ENCODE measurements at regions of chr16 and their contacts with region 1.

Region 1: GRCh38 chr16:57244767-57245471 is at the start of gene ARL2BP:
- DNase-seq: peak; percentile 92 to 98 (median 97)
- ATAC-seq: peak; percentile 95
- H3K4me3 ChIP-seq: peak within 1 kb of the TSS; percentile 68 to 76
- H3K4me3 Mint-ChIP-seq: peak within 1 kb of the TSS; percentile 92
- H3K27ac ChIP-seq: peak within 1 kb of the TSS; percentile 50 to 87
- H3K27ac Mint-ChIP-seq: peak within 1 kb of the TSS; percentile 96
- H3K4me1 ChIP-seq: peaks cover 9% of the 10 kb centered on the region
- H3K4me1 Mint-ChIP-seq: peaks cover 19% of the 10 kb centered on the region
- H3K27me3 ChIP-seq: no peaks in the 10 kb centered on the region
- H3K27me3 Mint-ChIP-seq: no peaks in the 10 kb centered on the region
- CTCF ChIP-seq: no peak
- total RNA-seq, gene ARL2BP: 32.8 to 35.2 TPM

Region 2: DNA sequence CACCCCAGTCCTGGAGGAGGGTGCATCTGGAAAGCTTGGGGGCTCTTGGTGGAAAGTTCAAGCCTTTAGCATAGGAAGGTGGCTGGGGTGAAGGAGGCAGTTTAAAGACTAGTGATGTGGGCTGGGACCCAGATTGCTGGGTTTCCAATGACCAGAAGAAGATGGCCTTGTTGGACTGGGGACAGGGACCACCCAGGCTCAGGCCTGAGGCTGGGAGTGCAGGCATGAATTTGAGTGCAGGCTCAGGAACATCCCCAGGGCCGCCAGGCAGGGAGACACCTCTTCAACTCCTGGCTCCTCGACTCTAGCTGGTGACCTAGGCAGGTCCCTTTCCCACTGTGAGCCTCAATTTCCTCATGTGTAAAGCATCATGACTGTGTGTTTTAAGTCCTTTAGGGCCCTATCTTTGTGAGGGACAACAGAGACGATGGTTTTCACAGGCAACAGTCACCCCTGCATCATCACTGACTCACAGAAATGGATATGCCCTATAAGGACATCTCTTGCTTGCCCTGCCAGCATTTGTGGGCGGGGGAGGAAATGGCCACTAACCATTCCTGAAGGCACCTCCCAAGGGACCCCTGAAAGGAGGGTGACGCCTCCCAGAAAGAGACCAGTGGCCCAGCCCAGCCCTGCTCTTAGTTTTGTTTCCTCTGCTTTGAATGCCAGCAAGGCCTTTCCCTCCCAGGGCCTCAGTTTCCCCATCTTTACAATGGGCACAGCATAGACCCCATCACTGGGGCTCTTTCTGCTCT is 244.5 kb before region 1 on chr16:
- CTCF ChIA-PET with region 1: no interaction called
- POLR2A ChIA-PET with region 1: no interaction called
- intact Hi-C with region 1: no loop called
- DNase-seq: peak in 4 of 9 experiments; percentile 61 to 69 (median 65)
- ATAC-seq: peak; percentile 65
- H3K4me3 ChIP-seq: peak overlapping the region; percentile 18 to 26
- H3K4me3 Mint-ChIP-seq: peak overlapping the region; percentile 71
- H3K27ac ChIP-seq: peak overlapping the region; percentile 58 to 90
- H3K27ac Mint-ChIP-seq: peak overlapping the region; percentile 96
- H3K4me1 ChIP-seq: peaks cover 90% of the 10 kb centered on the region
- H3K4me1 Mint-ChIP-seq: peaks cover 96% of the 10 kb centered on the region
- H3K27me3 ChIP-seq: no peaks in the 10 kb centered on the region
- H3K27me3 Mint-ChIP-seq: no peaks in the 10 kb centered on the region
- CTCF ChIP-seq: no peak

Region 3: GRCh38 chr16:57091975-57092785 is 152.7 kb before region 1 on chr16 and contains the start of gene CPNE2:
- CTCF ChIA-PET with region 1: no interaction called
- POLR2A ChIA-PET with region 1: no interaction called
- intact Hi-C with region 1: loop called in 1 of 2 experiments (anchors 5 kb)
- DNase-seq: peak in 2 of 9 experiments; percentile 20 to 50
- ATAC-seq: peak; percentile 57
- H3K4me3 ChIP-seq: peak within 1 kb of the TSS; percentile 31 to 49
- H3K4me3 Mint-ChIP-seq: peak within 1 kb of the TSS; percentile 79
- H3K27ac ChIP-seq: no peak within 1 kb of the TSS
- H3K27ac Mint-ChIP-seq: peak within 1 kb of the TSS; percentile 13
- H3K4me1 ChIP-seq: peaks cover 14% of the 10 kb centered on the region
- H3K4me1 Mint-ChIP-seq: peaks cover 14% of the 10 kb centered on the region
- H3K27me3 ChIP-seq: peaks cover 0 to 5% of the 10 kb centered on the region in 2 experiments
- H3K27me3 Mint-ChIP-seq: no peaks in the 10 kb centered on the region
- CTCF ChIP-seq: no peak
- total RNA-seq, gene CPNE2: 5.7 to 6.8 TPM

Region 4: DNA sequence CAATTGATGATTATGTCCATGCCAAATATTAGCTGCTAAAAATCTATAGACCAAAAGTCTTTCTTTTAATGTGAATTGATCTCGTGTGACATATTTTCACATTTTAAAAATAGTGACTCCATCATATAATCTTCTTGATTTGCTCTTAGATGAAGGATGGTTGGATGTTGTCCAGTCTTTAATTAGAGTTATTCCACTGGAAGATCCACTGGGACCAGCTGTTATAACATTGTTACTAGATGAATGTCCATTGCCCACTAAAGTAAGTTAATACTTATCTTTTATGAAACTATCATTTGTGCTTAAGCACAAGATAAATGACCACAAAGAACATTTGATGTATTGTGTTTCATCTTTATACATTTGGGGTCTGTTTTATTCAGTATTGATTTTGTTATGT is 36.0 kb before region 1 on chr16:
- CTCF ChIA-PET with region 1: no interaction called
- POLR2A ChIA-PET with region 1: no interaction called
- intact Hi-C with region 1: no loop called
- DNase-seq: no peak
- ATAC-seq: no peak
- H3K4me3 ChIP-seq: no peak overlapping the region
- H3K4me3 Mint-ChIP-seq: no peak overlapping the region
- H3K27ac ChIP-seq: no peak overlapping the region
- H3K27ac Mint-ChIP-seq: no peak overlapping the region
- H3K4me1 ChIP-seq: no peaks in the 10 kb centered on the region
- H3K4me1 Mint-ChIP-seq: peaks cover 2% of the 10 kb centered on the region
- H3K27me3 ChIP-seq: no peaks in the 10 kb centered on the region
- H3K27me3 Mint-ChIP-seq: no peaks in the 10 kb centered on the region
- CTCF ChIP-seq: no peak

Region 5: GRCh38 chr16:57284208-57284951 is 39.5 kb after region 1 on chr16 and contains the start of gene PLLP:
- CTCF ChIA-PET with region 1: no interaction called
- POLR2A ChIA-PET with region 1: no interaction called
- intact Hi-C with region 1: loop called (anchors 2 to 5 kb)
- DNase-seq: peak in 6 of 9 experiments; percentile 27 to 68 (median 49)
- ATAC-seq: peak; percentile 70
- H3K4me3 ChIP-seq: peak within 1 kb of the TSS; percentile 49 to 50
- H3K4me3 Mint-ChIP-seq: peak within 1 kb of the TSS; percentile 77
- H3K27ac ChIP-seq: no peak within 1 kb of the TSS
- H3K27ac Mint-ChIP-seq: no peak within 1 kb of the TSS
- H3K4me1 ChIP-seq: peaks cover 16% of the 10 kb centered on the region
- H3K4me1 Mint-ChIP-seq: peaks cover 25% of the 10 kb centered on the region
- H3K27me3 ChIP-seq: peaks cover 0 to 13% of the 10 kb centered on the region in 2 experiments
- H3K27me3 Mint-ChIP-seq: peaks cover 3% of the 10 kb centered on the region
- CTCF ChIP-seq: no peak
- total RNA-seq, gene PLLP: 0.47 to 1.1 TPM

Region 6: GRCh38 chr16:57422026-57422944 is 177.4 kb after region 1 on chr16:
- CTCF ChIA-PET with region 1: interaction called, 13 read pairs
- POLR2A ChIA-PET with region 1: no interaction called
- intact Hi-C with region 1: loop called (anchors 1 to 2 kb)
- DNase-seq: no peak
- ATAC-seq: no peak
- H3K4me3 ChIP-seq: no peak overlapping the region
- H3K4me3 Mint-ChIP-seq: no peak overlapping the region
- H3K27ac ChIP-seq: no peak overlapping the region
- H3K27ac Mint-ChIP-seq: no peak overlapping the region
- H3K4me1 ChIP-seq: peaks cover 18% of the 10 kb centered on the region
- H3K4me1 Mint-ChIP-seq: peaks cover 19% of the 10 kb centered on the region
- H3K27me3 ChIP-seq: no peaks in the 10 kb centered on the region
- H3K27me3 Mint-ChIP-seq: no peaks in the 10 kb centered on the region
- CTCF ChIP-seq: no peak

Region 7: GRCh38 chr16:57519796-57520360 is 275.0 kb after region 1 on chr16:
- CTCF ChIA-PET with region 1: no interaction called
- POLR2A ChIA-PET with region 1: no interaction called
- intact Hi-C with region 1: loop called in 1 of 2 experiments (anchors 5 kb)
- DNase-seq: peak; percentile 58 to 90 (median 83)
- ATAC-seq: peak; percentile 99
- H3K4me3 ChIP-seq: no peak overlapping the region
- H3K4me3 Mint-ChIP-seq: no peak overlapping the region
- H3K27ac ChIP-seq: no peak overlapping the region
- H3K27ac Mint-ChIP-seq: no peak overlapping the region
- H3K4me1 ChIP-seq: no peaks in the 10 kb centered on the region
- H3K4me1 Mint-ChIP-seq: peaks cover 6% of the 10 kb centered on the region
- H3K27me3 ChIP-seq: no peaks in the 10 kb centered on the region
- H3K27me3 Mint-ChIP-seq: no peaks in the 10 kb centered on the region
- CTCF ChIP-seq: peak; percentile 94

Measured in CD8-positive, alpha-beta T cell (primary cell).